Astrocyte of the cerebellum (primary cell): ENCODE measurements at regions of chr13 and their contacts with region 1.

Region 1: GRCh38 chr13:30851697-30852096 is 54.4 kb upstream of the MEDAG start:
- DNase-seq: no peak
- H3K4me3 ChIP-seq: no peak overlapping the region
- CTCF ChIP-seq: no peak

Region 2: GRCh38 chr13:30364876-30365275 is 486.8 kb before region 1 on chr13:
- in situ Hi-C with region 1: no loop called
- DNase-seq: no peak
- H3K4me3 ChIP-seq: no peak overlapping the region
- CTCF ChIP-seq: no peak

Region 3: GRCh38 chr13:30806784-30807183 is 44.9 kb before region 1 on chr13:
- in situ Hi-C with region 1: loop called (anchors 5 kb)
- DNase-seq: no peak
- H3K4me3 ChIP-seq: no peak overlapping the region
- CTCF ChIP-seq: no peak